ENCODE measurements at regions of chr20 and their contacts with region 1.

Region 1: GRCh38 chr20:36562724-36563123 is 10.7 kb upstream of the TGIF2 start:
- DNase-seq: no peak
- CTCF ChIP-seq: no peak

Region 2: DNA sequence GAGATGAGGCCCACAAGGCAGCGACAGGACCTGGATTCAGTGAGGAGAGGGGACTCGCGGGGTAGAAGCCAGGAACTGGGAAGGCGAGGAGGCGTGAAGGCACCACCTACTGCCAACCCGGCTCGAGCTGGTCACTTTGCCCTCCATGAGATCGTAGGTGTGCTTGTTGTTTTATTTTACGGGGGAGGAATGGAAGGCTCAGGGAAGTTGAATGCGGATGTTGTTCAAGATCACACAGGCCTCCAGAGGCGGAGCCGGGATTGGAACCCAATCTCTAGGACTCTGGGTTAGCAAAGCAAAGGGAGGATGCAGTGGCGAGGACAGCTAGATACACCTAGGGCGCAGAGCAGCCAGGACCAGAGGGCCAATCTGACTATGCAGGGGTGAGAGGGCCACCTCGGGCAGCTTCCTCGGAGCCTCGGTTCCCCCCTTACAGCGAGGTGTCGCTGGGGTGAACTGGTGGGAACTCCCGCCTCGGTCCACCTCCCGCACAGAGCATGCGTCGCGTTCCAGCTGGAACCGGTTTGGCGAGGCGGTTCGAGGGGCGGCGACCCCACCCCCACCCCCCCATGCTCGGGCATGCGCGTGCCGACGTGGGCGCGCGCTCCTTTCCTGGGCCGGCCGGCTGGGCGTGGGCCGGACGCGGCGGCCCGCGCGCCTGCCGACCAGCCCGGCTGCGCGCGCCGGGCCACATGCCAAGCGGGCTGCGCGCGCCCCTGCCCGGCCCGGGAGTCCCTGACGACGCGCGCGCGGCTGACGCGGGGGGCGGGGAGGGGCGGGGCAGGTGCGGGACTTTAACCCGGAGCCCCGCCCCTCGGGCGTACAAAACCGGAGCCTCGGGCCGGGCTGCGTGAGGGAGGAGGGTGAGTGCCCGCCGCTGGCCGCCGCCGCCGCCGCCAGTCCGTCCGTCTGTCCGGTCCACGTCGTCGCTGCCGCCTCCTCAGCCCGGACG is 101.8 kb before region 1 on chr20:
- CTCF ChIA-PET with region 1: no interaction called
- POLR2A ChIA-PET with region 1: no interaction called
- DNase-seq: peak; percentile 93
- CTCF ChIP-seq: no peak

Region 3: GRCh38 chr20:36519944-36520343 is 42.8 kb before region 1 on chr20:
- CTCF ChIA-PET with region 1: no interaction called
- POLR2A ChIA-PET with region 1: no interaction called
- DNase-seq: no peak
- CTCF ChIP-seq: no peak

Region 4: DNA sequence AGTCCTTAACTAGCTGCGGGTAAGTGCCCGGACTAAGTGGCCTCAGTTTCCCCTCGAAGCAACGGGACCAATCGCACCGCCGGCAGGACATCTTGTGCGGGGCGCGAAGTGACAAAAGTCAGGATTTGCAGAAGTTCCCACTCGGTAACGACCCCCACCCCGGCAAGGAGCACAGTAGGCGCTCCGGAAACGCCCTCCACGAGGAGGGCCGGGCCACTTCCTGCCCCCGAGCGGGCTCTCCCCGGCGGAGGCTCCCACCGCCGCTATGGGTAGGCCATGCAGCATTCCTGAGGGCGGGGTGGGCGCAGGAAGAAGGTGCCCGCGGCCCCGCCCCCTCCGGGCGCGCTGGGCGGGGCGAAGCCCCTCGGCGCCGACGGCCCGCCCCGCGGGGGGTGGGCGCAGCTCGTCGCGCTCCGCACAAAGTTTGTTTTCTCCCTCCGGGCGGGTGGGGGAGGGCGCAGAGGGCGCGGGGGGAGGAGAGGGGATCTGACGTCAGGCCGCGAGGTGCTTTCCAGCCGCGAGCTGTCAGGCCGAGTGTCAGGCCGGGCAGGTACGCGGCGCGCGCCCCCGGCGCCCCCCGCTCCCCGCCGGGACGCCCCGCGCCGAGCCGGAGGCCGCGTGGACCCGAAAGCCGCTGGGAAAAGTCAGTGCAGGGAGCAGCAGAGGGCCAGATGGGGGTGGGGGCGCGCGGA is 10.5 kb after region 1 on chr20 and contains the start of gene TGIF2:
- CTCF ChIA-PET with region 1: interaction called, 11 read pairs
- POLR2A ChIA-PET with region 1: no interaction called
- DNase-seq: peak; percentile 99
- CTCF ChIP-seq: no peak

Region 5: GRCh38 chr20:36830791-36831691 is 268.3 kb after region 1 on chr20:
- CTCF ChIA-PET with region 1: no interaction called
- POLR2A ChIA-PET with region 1: no interaction called
- DNase-seq: no peak
- CTCF ChIP-seq: no peak

Measured in GM10248 (cell line).